Dendritic cell treated with granulocyte-macrophage colony-stimulating factor and Interleukin-4, amounts not matched to agents 40 ng/mL and 50 ng/mL, for 4 days (primary cell): ENCODE measurements at regions of chr1 and their contacts with region 1.

Region 1: GRCh38 chr1:53837924-53838652 is at the start of gene NDC1:
- H3K4me3 Mint-ChIP-seq: peak within 1 kb of the TSS; percentile 98
- H3K27ac Mint-ChIP-seq: peak within 1 kb of the TSS; percentile 100
- H3K4me1 Mint-ChIP-seq: peaks cover 8% of the 10 kb centered on the region
- H3K27me3 Mint-ChIP-seq: no peaks in the 10 kb centered on the region

Region 2: DNA sequence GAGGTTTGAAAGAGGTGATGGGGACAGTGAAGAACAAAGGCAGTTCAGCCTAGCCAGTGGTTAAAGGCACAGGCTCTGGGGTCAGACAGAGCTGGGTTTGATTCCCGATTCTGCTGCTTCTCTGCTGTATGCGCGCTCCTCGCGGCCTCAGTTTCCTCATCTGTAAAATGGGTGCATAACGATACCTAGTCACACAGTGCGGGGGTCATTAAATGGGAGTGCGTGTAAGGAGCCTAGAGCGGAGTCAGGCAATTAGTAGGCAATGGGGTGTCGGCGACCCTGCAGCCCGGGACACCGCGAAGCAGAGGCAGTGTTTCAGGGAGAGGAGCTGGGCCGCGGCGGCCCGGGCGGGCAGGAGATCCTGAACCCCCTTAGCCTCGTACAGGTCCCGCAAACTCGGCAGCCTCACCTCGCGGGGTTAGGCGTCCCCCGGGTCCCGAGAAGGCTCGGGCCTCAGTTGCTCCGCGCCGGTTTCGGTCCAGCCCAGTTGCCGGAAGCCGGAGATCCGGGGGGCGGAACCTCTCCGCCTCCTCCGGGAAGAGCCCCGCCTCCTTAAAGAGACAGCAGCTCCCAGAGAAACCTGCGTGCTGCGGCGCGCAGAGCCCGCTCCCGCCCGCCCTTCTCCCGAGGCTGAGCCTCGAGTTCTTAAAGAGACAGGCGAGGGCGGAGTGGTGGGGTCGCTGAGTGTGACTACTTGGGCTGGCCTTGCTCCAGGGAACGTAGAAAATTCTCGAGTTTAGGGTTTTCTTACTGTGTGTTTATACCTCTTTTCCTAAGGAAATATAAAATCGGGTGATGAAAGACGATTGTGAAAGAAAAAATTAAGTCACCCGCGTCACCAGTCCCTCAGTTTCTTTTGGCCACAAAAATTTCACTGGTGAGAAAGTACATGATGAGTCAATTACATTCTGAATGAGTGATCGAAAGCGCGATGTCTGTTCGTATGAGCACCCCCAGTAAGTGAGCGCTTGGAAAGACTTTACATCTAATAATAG is 51.5 kb after region 1 on chr1 and contains the start of gene YIPF1:
- intact Hi-C with region 1: loop called (anchors 2 kb)
- H3K4me3 Mint-ChIP-seq: peak within 1 kb of the TSS; percentile 99
- H3K27ac Mint-ChIP-seq: peak within 1 kb of the TSS; percentile 96
- H3K4me1 Mint-ChIP-seq: peaks cover 70% of the 10 kb centered on the region
- H3K27me3 Mint-ChIP-seq: no peaks in the 10 kb centered on the region